ENCODE measurements at regions of chr1 and their contacts with region 1.

Region 1: DNA sequence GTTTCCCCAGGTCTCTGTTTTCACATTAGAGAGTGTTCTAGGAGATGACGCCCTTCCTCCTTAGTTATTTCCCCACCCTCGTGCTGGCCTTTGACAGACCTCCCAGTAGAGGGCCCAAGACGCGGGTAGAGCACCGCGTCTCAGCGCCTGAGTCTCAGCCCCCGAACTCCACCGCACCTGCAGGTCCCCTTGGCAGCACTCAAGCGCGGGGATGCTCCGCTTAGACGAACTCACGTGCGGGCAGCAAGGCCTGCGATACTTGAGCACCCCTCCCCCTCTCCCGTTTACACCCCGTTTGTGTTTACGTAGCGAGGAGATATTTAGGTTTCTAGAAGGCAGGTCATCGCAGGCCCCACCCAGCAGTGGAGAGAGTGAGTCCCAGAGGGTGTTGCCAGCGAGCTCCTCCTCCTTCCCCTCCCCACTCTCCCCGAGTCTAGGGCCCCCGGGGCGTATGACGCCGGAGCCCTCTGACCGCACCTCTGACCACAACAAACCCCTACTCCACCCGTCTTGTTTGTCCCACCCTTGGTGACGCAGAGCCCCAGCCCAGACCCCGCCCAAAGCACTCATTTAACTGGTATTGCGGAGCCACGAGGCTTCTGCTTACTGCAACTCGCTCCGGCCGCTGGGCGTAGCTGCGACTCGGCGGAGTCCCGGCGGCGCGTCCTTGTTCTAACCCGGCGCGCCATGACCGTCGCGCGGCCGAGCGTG is at the start of gene CD55:
- DNase-seq: peak; percentile 98
- ATAC-seq: peak; percentile 98
- total RNA-seq, gene CD55: 68.9 TPM

Region 2: GRCh38 chr1:207205614-207206061 is 115.6 kb before region 1 on chr1:
- intact Hi-C with region 1: loop called (anchors 2 kb)
- DNase-seq: no peak
- ATAC-seq: no peak

Region 3: GRCh38 chr1:207251066-207251465 is 70.2 kb before region 1 on chr1:
- intact Hi-C with region 1: loop called (anchors 5 kb)
- DNase-seq: no peak
- ATAC-seq: no peak

Region 4: GRCh38 chr1:207277241-207277640 is 44.0 kb before region 1 on chr1:
- intact Hi-C with region 1: no loop called
- DNase-seq: no peak
- ATAC-seq: no peak

Measured in Right ventricle myocardium inferior (tissue), 1 donor.